ENCODE measurements at regions of chr11 and their contacts with region 1.

Region 1: GRCh38 chr11:10379022-10379421 is 74.1 kb downstream of the ADM start:
- DNase-seq: peak in 1 of 2 experiments; percentile 71
- H3K4me3 ChIP-seq: no peak overlapping the region
- H3K4me3 Mint-ChIP-seq: no peak overlapping the region
- H3K27ac Mint-ChIP-seq: no peak overlapping the region
- H3K4me1 ChIP-seq: peaks cover 5% of the 10 kb centered on the region; the same call in 1 of the 2 replicates
- H3K4me1 Mint-ChIP-seq: peaks cover 5% of the 10 kb centered on the region
- H3K27me3 ChIP-seq: no peaks in the 10 kb centered on the region
- H3K27me3 Mint-ChIP-seq: no peaks in the 10 kb centered on the region
- CTCF ChIP-seq: no peak

Region 2: GRCh38 chr11:10257478-10257877 is 121.5 kb before region 1 on chr11:
- CTCF ChIA-PET with region 1: no interaction called
- POLR2A ChIA-PET with region 1: interaction called, 10 read pairs
- intact Hi-C with region 1: no loop called
- DNase-seq: no peak
- H3K4me3 ChIP-seq: no peak overlapping the region
- H3K4me3 Mint-ChIP-seq: no peak overlapping the region
- H3K27ac Mint-ChIP-seq: no peak overlapping the region
- H3K4me1 ChIP-seq: peaks cover 12% of the 10 kb centered on the region; the same call in 1 of the 2 replicates
- H3K4me1 Mint-ChIP-seq: peaks cover 7% of the 10 kb centered on the region
- H3K27me3 ChIP-seq: no peaks in the 10 kb centered on the region
- H3K27me3 Mint-ChIP-seq: no peaks in the 10 kb centered on the region
- CTCF ChIP-seq: no peak

Region 3: GRCh38 chr11:10285148-10285802 is 93.7 kb before region 1 on chr11:
- CTCF ChIA-PET with region 1: no interaction called
- POLR2A ChIA-PET with region 1: no interaction called
- intact Hi-C with region 1: no loop called
- DNase-seq: no peak
- H3K4me3 ChIP-seq: no peak overlapping the region
- H3K4me3 Mint-ChIP-seq: no peak overlapping the region
- H3K27ac Mint-ChIP-seq: no peak overlapping the region
- H3K4me1 ChIP-seq: peaks cover 19% of the 10 kb centered on the region
- H3K4me1 Mint-ChIP-seq: no peaks in the 10 kb centered on the region
- H3K27me3 ChIP-seq: no peaks in the 10 kb centered on the region
- H3K27me3 Mint-ChIP-seq: no peaks in the 10 kb centered on the region
- CTCF ChIP-seq: no peak

Measured in Caco-2 (cell line).